CD4-positive, alpha-beta memory T cell (primary cell): ENCODE measurements at regions of chr12 and their contacts with region 1.

Region 1: DNA sequence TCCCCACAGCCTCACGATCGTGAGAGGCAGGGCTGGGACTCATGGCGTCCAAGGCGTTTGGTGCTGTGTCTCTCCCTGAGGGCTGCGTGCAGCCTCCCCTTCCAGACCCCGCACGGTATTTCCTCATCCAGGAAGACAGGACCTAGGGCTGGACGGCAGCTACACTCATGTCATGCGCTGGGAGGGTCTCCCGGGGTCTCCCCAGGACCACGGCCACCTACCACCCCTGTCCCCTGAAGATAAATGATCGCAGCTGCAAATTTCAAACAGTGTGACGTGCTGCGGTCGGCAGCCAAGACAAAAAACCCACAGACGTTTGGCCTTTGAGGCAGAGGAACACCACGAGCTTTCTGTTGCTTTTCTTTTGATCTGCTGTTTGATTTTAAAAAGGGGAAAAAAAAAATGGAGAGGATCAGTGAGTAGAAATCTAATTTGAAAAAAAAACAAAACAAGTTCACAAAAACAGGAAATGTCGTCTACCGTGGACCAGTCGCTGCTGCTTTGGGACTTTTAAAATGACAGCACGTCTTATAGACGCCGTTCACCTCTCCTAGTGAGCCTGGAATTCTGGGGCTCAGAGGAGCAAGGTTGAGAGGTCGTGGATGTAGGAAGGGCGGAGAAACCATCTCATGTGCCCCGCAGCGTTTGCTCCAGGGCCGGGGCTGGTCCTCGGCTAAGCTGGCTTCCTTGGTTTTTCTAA is 237.6 kb downstream of the SLC41A2 start:
- DNase-seq: peak; percentile 87 to 92 (median 88)
- H3K4me3 ChIP-seq: peak overlapping the region; percentile 31 to 54
- H3K4me3 Mint-ChIP-seq: peak overlapping the region; percentile 65 to 90 (median 83)
- H3K27ac ChIP-seq: peak overlapping the region; percentile 78
- H3K27ac Mint-ChIP-seq: peak overlapping the region; percentile 92 to 99 (median 96)
- H3K4me1 ChIP-seq: peaks cover 37% of the 10 kb centered on the region
- H3K4me1 Mint-ChIP-seq: peaks cover 42 to 74% (median 55%) of the 10 kb centered on the region in 4 donors
- H3K27me3 ChIP-seq: no peaks in the 10 kb centered on the region
- H3K27me3 Mint-ChIP-seq: no peaks in the 10 kb centered on the region

Region 2: GRCh38 chr12:104569346-104570173 is 150.9 kb before region 1 on chr12:
- CTCF ChIA-PET with region 1: no interaction called
- POLR2A ChIA-PET with region 1: no interaction called
- intact Hi-C with region 1: no loop called
- DNase-seq: peak; percentile 54 to 86 (median 60)
- H3K4me3 ChIP-seq: peak overlapping the region in 1 of 2 donors; percentile 1
- H3K4me3 Mint-ChIP-seq: peak overlapping the region in 7 of 8 donors; percentile 52 to 81 (median 72)
- H3K27ac ChIP-seq: peak overlapping the region; percentile 52
- H3K27ac Mint-ChIP-seq: peak overlapping the region; percentile 77 to 94 (median 84)
- H3K4me1 ChIP-seq: peaks cover 49% of the 10 kb centered on the region
- H3K4me1 Mint-ChIP-seq: peaks cover 50 to 78% (median 62%) of the 10 kb centered on the region in 4 donors
- H3K27me3 ChIP-seq: no peaks in the 10 kb centered on the region
- H3K27me3 Mint-ChIP-seq: no peaks in the 10 kb centered on the region

Region 3: DNA sequence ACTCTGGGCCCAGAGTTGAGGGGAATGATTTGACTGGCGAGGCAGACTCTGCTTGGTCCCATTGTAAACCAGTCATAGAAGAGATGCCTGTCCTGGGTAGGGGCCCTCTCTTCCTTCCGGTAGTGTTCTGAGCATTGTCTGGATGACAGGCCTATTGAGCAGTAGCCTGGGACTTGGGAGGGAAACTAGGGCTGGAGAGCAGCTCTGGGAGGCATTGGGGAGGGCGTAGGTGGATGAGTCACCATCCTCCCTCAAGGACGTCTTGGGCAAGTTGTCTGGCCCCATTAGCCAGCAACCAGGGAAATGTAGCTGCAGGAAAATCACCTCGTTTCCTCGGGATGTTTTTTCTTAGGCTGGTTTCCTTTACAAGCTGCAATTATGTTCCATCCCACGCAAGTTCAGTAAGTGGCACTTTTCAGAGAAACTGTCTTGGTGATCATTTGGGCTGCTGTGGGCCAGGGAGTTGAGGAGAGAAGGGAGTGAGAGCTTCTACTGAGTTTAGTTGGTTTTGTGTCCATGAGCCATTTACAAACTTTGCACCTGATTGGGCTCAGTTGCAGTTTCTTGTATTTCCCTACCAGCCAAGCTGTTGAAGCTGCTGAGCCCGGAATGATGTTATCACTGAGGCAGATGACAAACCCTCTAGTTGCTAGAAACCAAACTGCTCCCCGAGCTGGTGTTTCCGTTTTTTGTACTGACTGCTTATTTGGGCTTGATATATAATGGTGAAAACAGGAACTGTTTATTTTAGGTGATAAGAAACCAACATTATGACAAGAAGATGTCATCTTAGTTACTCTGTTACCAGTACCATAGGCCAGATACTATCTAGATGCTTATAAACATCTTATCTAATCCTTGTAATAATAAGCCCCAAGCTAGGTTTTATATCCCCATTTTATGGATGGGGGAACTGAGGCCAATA is 116.2 kb before region 1 on chr12:
- CTCF ChIA-PET with region 1: no interaction called
- POLR2A ChIA-PET with region 1: interaction called, 4 read pairs
- intact Hi-C with region 1: loop called (anchors 2 kb)
- DNase-seq: peak; percentile 47 to 77 (median 66)
- H3K4me3 ChIP-seq: no peak overlapping the region
- H3K4me3 Mint-ChIP-seq: peak overlapping the region; percentile 16 to 81 (median 50)
- H3K27ac ChIP-seq: peak overlapping the region; percentile 52
- H3K27ac Mint-ChIP-seq: peak overlapping the region; percentile 68 to 96 (median 90)
- H3K4me1 ChIP-seq: peaks cover 48% of the 10 kb centered on the region
- H3K4me1 Mint-ChIP-seq: peaks cover 61 to 90% (median 75%) of the 10 kb centered on the region in 4 donors
- H3K27me3 ChIP-seq: no peaks in the 10 kb centered on the region
- H3K27me3 Mint-ChIP-seq: no peaks in the 10 kb centered on the region

Region 4: DNA sequence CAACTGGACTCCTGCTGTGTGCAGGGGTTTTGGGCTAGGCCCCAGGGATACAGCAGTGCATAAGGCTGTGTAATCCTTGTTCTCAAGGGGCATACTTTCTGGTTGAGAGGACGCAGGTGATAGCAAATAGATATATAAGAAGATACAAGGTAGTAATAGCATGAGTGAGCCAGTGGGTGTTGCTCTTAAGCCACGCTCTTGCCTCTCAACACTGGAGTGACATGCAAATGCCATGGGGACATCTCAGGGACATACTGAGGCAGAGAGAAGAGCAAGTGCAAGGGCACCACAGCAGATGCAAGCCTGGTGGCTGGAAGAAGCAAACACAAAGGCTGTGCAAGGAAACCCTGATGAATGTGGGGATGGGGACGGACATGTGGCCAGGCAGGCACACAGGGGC is 40.4 kb before region 1 on chr12:
- CTCF ChIA-PET with region 1: no interaction called
- POLR2A ChIA-PET with region 1: no interaction called
- intact Hi-C with region 1: loop called (anchors 2 kb)
- DNase-seq: peak in 4 of 5 donors; percentile 36 to 51 (median 39)
- H3K4me3 ChIP-seq: no peak overlapping the region
- H3K4me3 Mint-ChIP-seq: peak overlapping the region in 3 of 8 donors; percentile 14 to 45 (median 17)
- H3K27ac ChIP-seq: no peak overlapping the region
- H3K27ac Mint-ChIP-seq: peak overlapping the region in 5 of 7 donors; percentile 2 to 86 (median 82)
- H3K4me1 ChIP-seq: peaks cover 53% of the 10 kb centered on the region
- H3K4me1 Mint-ChIP-seq: peaks cover 48 to 83% (median 65%) of the 10 kb centered on the region in 4 donors
- H3K27me3 ChIP-seq: no peaks in the 10 kb centered on the region
- H3K27me3 Mint-ChIP-seq: no peaks in the 10 kb centered on the region

Region 5: DNA sequence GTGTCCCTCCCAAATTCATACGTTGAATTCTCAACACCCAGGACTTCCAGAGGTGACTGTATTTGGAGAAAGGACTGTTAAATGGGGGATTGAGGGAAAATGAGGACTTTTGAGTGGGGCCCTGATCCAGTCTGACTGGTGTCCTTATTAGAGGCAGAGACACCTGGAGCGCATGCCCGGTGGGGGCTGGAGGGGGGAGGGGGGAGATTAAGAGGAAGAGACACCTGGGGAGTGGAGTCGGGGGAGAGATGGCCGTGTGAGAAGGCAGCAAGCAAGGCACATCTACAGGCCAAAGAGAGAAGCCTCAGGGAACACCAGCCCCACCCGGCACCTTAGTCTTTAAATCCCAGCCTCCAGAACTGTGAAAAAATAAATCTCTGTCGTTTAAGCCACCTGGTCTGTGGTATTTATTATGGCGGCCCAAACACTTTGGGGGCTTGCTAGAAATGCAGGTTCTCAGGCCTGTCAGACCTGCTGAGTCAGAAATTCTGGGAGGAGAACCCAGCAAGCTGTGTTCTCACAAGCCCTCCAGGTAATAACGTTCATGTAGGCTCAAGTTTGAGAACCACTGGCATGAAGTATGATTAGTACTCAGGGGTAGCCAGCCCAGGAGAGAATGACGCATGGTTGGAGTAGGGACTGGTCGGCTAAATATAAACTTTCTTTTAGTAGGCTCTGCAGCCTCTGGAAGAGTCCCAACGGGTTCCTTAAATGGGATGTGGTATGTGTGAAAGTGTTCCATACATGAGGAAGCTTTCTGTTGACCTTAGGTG is 28.1 kb after region 1 on chr12:
- CTCF ChIA-PET with region 1: no interaction called
- POLR2A ChIA-PET with region 1: interaction called, 13 read pairs
- intact Hi-C with region 1: no loop called
- DNase-seq: no peak
- H3K4me3 ChIP-seq: peak overlapping the region in 1 of 2 donors; percentile 5
- H3K4me3 Mint-ChIP-seq: peak overlapping the region in 5 of 8 donors; percentile 18 to 68 (median 67)
- H3K27ac ChIP-seq: no peak overlapping the region
- H3K27ac Mint-ChIP-seq: peak overlapping the region; percentile 43 to 89 (median 65)
- H3K4me1 ChIP-seq: peaks cover 45% of the 10 kb centered on the region
- H3K4me1 Mint-ChIP-seq: peaks cover 57 to 79% (median 70%) of the 10 kb centered on the region in 4 donors
- H3K27me3 ChIP-seq: no peaks in the 10 kb centered on the region
- H3K27me3 Mint-ChIP-seq: no peaks in the 10 kb centered on the region

Region 6: GRCh38 chr12:104779134-104779533 is 58.6 kb after region 1 on chr12:
- CTCF ChIA-PET with region 1: no interaction called
- POLR2A ChIA-PET with region 1: no interaction called
- intact Hi-C with region 1: no loop called
- DNase-seq: no peak
- H3K4me3 ChIP-seq: no peak overlapping the region
- H3K4me3 Mint-ChIP-seq: no peak overlapping the region
- H3K27ac ChIP-seq: no peak overlapping the region
- H3K27ac Mint-ChIP-seq: no peak overlapping the region
- H3K4me1 ChIP-seq: no peaks in the 10 kb centered on the region
- H3K4me1 Mint-ChIP-seq: no peaks in the 10 kb centered on the region
- H3K27me3 ChIP-seq: no peaks in the 10 kb centered on the region
- H3K27me3 Mint-ChIP-seq: peaks cover 2 to 4% of the 10 kb centered on the region in 2 donors